ENCODE measurements at regions of chr1 and their contacts with region 1.

Region 1: DNA sequence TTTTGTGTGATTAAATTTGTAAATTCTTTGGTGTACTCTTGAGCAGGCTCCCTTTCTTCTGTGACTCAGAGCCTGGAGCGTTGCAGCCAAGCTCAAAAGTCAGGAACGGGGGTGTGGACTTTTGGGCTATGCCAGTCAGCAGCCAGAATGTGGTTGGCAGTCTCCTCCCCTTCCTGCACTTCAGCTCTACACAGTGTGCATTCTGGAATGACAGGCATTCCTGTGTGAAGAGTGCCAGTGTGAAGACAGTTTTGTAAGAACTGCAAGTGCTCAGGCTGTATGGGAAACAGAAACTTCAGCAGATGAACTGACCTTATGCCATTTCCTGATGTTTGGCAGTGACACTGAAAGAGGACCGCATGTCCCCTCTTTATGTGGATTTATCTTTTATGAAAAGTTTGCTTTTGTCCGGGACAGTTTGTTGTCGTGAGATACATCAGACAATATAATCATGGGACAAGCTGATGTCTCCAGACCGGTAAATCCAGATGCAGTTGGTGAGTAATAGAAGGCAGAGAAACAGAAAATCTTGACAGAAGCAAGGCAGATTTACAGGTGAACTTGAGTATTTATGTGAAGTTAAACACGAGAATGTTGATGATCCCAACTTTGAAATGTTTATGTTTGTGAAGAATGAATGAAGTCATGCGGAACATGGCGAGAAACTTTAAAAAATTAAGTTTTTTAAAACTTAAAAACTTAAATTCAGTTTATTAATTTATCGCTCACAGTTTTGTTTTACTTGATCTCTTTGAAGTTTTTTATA is 67.7 kb upstream of the RCC1 start:
- DNase-seq: peak; percentile 75 to 91 (median 81)
- ATAC-seq: peak; percentile 99 to 100 (median 99)
- H3K4me3 ChIP-seq: peak overlapping the region; percentile 6 to 56 (median 43)
- H3K27ac ChIP-seq: peak overlapping the region; percentile 51 to 85 (median 76)
- H3K4me1 ChIP-seq: peaks cover 0 to 36% (median 12%) of the 10 kb centered on the region in 12 donors
- H3K27me3 ChIP-seq: no peaks in the 10 kb centered on the region
- CTCF ChIP-seq: no peak
- POLR2A ChIP-seq: peak in 1 of 2 donors; percentile 71

Region 2: GRCh38 chr1:28301471-28302174 is 136.5 kb before region 1 on chr1:
- intact Hi-C with region 1: no loop called
- DNase-seq: no peak
- ATAC-seq: no peak
- H3K4me3 ChIP-seq: no peak overlapping the region
- H3K27ac ChIP-seq: no peak overlapping the region
- H3K4me1 ChIP-seq: no peaks in the 10 kb centered on the region
- H3K27me3 ChIP-seq: no peaks in the 10 kb centered on the region
- CTCF ChIP-seq: no peak
- POLR2A ChIP-seq: no peak

Region 3: DNA sequence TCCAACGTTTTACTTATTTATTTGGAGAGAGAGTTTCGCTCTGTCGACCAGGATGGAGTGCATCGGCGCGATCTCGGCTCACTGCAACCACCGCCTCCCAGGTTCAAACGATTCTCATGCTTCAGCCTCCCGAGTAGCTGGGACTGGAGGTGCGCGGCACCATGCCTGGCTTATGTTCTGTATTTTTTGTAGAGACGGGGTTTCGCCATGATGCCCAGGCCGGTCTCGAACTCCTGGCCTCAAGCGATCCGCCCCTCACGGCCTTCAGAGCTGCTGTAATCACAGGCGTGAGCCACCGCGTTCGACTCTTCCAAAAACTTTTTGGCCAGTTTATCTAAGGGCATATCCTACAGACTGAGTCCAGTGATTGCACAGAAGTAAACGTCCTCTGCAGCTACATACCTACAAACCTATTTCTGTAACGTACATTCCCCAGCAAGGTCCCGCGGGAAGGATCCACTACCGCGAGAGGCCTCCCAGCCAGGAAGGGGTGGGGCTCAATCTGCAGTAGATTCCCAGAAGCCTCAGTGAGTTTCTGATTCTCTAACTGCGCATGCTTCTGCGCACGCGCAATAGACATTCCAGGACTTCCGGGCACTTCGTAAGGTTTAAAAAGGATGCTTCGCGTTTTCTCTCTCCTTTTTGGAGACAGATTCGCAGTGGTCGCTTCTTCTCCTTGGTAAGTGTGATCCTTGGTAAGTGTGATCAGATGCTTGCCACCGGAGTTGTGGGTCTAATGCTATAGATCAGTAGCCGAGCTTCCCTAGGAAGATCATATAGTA is 67.5 kb after region 1 on chr1 and contains the start of gene RCC1:
- intact Hi-C with region 1: loop called in 1 of 10 experiments (anchors 10 kb)
- DNase-seq: peak; percentile 96 to 99 (median 97)
- ATAC-seq: peak; percentile 97 to 99 (median 98)
- H3K4me3 ChIP-seq: peak within 1 kb of the TSS; percentile 66 to 86 (median 78)
- H3K27ac ChIP-seq: peak within 1 kb of the TSS; percentile 51 to 94 (median 86)
- H3K4me1 ChIP-seq: peaks cover 6 to 44% (median 34%) of the 10 kb centered on the region in 12 donors
- H3K27me3 ChIP-seq: no peaks in the 10 kb centered on the region
- CTCF ChIP-seq: no peak
- POLR2A ChIP-seq: peak; percentile 63 to 94
- total RNA-seq, gene RCC1: 2.4 to 20.1 (median 5.0) TPM

Region 4: GRCh38 chr1:28703629-28704028 is 265.5 kb after region 1 on chr1:
- intact Hi-C with region 1: no loop called
- DNase-seq: no peak
- ATAC-seq: no peak
- H3K4me3 ChIP-seq: no peak overlapping the region
- H3K27ac ChIP-seq: no peak overlapping the region
- H3K4me1 ChIP-seq: no peaks in the 10 kb centered on the region
- H3K27me3 ChIP-seq: no peaks in the 10 kb centered on the region
- CTCF ChIP-seq: no peak
- POLR2A ChIP-seq: no peak